ENCODE measurements at regions of chr2 and their contacts with region 1.

Region 1: DNA sequence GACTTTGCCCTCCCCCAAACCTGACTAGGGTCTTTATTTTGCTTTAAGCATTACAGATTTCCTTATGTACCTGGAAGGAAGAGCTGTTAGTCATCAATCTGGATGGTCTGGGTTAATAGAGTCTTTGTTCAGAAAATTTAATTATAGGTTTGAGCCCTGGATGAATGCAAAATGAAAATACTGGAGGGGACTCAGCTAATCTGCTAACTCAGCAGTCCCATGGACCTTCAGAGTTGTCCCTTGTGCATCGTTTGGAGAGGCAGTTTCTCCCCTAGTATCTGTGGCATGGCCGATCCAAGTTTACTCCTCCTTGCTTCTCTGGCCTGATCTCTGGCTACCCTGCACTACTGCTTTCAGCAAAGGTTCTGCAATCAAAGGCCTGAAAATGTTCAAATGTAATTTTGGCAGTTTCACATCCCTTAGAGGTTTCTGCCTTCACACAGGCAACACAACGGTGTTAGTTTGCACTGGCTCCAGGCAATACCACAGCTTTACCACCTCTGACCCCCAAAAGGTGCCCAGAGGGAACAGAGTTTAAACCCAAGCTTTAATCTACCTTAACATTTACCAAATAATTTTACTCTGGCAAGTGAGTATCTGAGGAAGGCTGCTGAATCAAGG is 134.3 kb downstream of the THADA start:
- DNase-seq: no peak
- H3K4me3 ChIP-seq: no peak overlapping the region
- CTCF ChIP-seq: no peak

Region 2: GRCh38 chr2:43239981-43240761 is 221.4 kb before region 1 on chr2:
- in situ Hi-C with region 1: loop called (anchors 10 kb)
- DNase-seq: no peak
- H3K4me3 ChIP-seq: no peak overlapping the region
- CTCF ChIP-seq: no peak